Astrocyte of the cerebellum (primary cell): ENCODE measurements at regions of chr1 and their contacts with region 1.

Region 1: GRCh38 chr1:159981351-159982055 is 27.5 kb upstream of the SLAMF9 start:
- DNase-seq: no peak
- H3K4me3 ChIP-seq: no peak overlapping the region
- CTCF ChIP-seq: no peak

Region 2: DNA sequence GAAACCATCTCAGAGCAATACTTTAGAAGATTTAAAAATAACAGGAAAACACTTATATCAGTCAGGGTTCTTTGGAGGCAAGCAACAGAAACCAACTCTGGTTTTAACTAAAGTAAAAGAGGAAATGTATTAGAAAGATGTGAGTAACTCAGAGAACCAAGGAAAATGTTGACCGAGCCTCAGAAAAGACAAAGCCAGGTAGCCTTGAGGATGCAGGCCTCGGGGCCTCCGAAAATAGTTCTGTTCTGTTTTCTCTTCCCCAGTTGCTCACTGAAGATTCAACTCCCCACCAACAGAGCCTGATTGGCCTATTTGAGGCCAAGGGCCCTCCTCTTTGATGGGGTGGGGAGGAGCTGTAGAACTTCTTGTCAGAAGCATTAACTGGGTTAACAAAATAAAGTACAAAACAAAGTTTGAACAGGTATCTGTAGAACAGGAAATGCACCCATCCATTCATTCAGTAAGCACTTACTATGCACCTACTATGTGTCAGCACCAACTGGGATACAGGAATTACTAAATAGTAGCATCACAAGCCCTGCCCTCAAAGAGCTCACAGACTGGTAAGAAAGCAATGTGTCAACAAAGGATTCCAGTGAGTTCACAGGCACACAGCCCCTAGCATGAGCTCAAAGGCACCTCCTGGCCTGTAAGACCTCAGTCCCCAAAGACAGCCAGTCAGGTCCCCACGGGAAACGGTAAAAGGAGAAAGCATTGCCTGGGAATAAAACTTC is 142.2 kb before region 1 on chr1:
- in situ Hi-C with region 1: no loop called
- DNase-seq: no peak
- H3K4me3 ChIP-seq: no peak overlapping the region
- CTCF ChIP-seq: no peak

Region 3: GRCh38 chr1:159945483-159946241 is 35.8 kb before region 1 on chr1 and contains the start of gene IGSF9:
- in situ Hi-C with region 1: loop called (anchors 5 kb)
- DNase-seq: no peak
- H3K4me3 ChIP-seq: peak within 1 kb of the TSS; percentile 41
- CTCF ChIP-seq: peak; percentile 43